Heart right ventricle (tissue), 16 donors: ENCODE measurements at regions of chr16 and their contacts with region 1.

Region 1: DNA sequence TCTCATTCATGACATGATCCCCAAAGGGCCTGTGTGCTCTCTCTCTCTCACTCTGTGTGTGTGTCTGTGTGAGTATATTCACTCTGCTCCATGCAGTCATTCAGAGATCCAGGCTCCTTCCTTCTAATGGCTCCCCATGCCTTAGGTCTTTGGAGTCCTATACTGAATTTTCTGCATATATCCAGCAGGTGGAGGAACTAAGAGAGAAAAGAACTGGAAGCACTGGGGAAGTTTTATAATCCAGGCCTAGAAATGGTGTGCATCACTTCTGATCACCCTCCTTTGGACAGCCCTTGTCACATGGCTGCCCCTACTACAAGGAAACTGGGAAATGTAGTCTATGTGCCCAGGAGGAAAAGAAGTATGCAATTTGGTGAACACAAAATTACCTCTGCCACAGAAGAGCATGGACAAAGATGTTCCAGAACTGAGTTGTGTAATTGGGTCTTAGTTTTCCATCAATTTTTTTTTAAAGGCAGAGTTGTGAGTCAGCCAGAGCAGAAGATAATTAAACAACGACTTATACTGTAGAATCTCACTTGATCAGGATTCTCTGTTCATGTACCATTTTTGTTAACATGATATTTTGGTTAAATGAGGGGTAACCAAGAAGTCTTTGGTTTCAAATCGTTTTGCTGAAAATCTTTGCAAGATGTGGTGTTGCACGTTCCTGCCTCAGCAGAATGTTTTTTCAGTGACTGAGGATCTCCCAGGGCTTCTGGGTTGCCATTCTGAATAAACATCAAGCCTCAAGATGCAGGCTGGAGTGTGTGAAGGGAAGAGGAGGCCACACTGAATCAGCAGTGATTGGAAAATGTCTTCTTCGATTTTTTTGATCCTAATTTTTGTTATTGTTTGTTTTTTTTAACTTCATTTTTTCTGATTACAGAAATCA is 232.5 kb upstream of the IRX3 start:
- DNase-seq: no peak
- ATAC-seq: no peak
- H3K4me3 ChIP-seq: no peak overlapping the region
- H3K27ac ChIP-seq: no peak overlapping the region
- H3K4me1 ChIP-seq: peaks cover 0 to 26% (median 12%) of the 10 kb centered on the region in 9 donors
- H3K27me3 ChIP-seq: no peaks in the 10 kb centered on the region
- CTCF ChIP-seq: no peak

Region 2: GRCh38 chr16:56032072-56032471 is 1513.0 kb after region 1 on chr16:
- intact Hi-C with region 1: loop called in 1 of 10 experiments (anchors 5 kb)
- DNase-seq: no peak
- ATAC-seq: peak in 4 of 8 donors; percentile 56 to 78 (median 66)
- H3K4me3 ChIP-seq: no peak overlapping the region
- H3K27ac ChIP-seq: no peak overlapping the region
- H3K4me1 ChIP-seq: peaks cover 0 to 4% (median 0%) of the 10 kb centered on the region in 9 donors
- H3K27me3 ChIP-seq: no peaks in the 10 kb centered on the region
- CTCF ChIP-seq: no peak